Psoas muscle (tissue), 8 donors: ENCODE measurements at regions of chr1 and their contacts with region 1.

Region 1: DNA sequence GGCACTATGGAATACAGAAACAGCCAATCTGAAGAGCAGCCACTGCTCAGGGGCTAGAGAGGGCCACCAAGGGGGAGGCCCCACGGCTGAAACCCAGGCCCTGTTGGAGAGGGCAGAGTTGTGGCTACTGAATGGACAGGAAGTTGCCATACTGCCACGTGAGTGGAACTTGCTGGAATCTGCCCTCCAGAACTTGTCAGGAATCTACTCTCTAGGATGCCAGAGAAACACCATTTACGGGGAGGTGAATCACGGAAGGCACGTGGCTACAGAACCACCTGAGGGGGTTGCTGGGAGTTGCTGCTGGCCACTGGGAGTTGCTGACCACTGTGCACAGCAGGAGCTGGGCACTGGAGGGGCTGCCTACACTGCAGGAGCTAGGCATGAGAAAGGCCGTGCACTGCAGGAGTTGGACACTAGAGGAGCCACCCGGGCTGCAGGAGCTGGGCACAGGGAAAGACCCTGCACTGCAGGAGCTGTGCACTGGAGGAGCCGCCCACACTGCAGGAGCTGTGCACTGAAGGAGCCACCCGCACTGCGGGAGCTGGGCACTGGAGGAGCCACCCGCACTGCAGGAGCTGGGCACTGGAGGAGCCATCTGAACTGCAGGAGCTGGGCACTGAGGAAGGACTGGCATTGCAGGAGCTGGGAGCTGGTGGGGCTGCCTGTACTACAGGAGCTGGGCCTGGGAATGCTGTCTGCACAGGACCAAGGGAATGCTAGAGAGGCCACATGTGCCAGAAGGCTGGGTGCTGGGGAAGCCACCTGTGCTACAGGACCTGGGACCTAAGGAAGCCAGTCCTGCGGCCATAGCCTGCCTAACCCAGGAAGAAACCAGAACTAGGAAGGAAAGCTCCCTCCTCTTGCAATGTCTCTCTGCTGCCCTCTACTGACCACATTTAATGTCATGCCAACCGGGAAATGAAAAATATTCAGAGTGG is 343.4 kb downstream of the MATN1 start:
- DNase-seq: no peak
- ATAC-seq: peak; percentile 69 to 89 (median 85)
- H3K4me3 ChIP-seq: no peak overlapping the region
- H3K27ac ChIP-seq: no peak overlapping the region
- H3K4me1 ChIP-seq: no peaks in the 10 kb centered on the region
- H3K27me3 ChIP-seq: peaks cover 0 to 3% (median 0%) of the 10 kb centered on the region in 3 donors
- CTCF ChIP-seq: peak; percentile 84

Region 2: GRCh38 chr1:29802181-29803068 is 577.5 kb before region 1 on chr1:
- intact Hi-C with region 1: loop called in 1 of 2 experiments (anchors 10 kb)
- DNase-seq: no peak
- ATAC-seq: no peak
- H3K4me3 ChIP-seq: no peak overlapping the region
- H3K27ac ChIP-seq: no peak overlapping the region
- H3K4me1 ChIP-seq: no peaks in the 10 kb centered on the region
- H3K27me3 ChIP-seq: peaks cover 0 to 18% (median 2%) of the 10 kb centered on the region in 3 donors
- CTCF ChIP-seq: no peak

Region 3: DNA sequence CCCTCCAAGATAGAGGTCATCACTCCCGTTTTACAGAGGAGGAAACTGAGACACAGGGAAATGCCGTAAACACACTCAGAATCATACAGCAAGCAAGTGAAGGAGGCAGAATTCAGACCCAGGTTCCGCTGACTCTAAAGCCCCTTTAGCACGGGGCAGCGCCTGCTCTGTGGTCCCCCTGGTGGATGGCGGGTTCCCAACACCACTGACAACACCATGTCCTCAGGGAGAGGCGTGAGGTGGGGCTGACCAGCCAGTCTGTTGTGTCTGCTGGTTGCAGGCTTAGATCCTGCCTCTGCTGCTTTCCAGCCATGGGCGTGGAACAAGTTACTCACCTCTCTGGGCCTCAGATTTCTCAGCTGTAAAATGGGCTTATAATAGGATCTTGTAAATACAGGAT is 273.8 kb before region 1 on chr1:
- intact Hi-C with region 1: loop called in 1 of 2 experiments (anchors 5 kb)
- DNase-seq: no peak
- ATAC-seq: no peak
- H3K4me3 ChIP-seq: no peak overlapping the region
- H3K27ac ChIP-seq: no peak overlapping the region
- H3K4me1 ChIP-seq: no peaks in the 10 kb centered on the region
- H3K27me3 ChIP-seq: peaks cover 0 to 48% (median 23%) of the 10 kb centered on the region in 3 donors
- CTCF ChIP-seq: peak; percentile 37

Region 4: DNA sequence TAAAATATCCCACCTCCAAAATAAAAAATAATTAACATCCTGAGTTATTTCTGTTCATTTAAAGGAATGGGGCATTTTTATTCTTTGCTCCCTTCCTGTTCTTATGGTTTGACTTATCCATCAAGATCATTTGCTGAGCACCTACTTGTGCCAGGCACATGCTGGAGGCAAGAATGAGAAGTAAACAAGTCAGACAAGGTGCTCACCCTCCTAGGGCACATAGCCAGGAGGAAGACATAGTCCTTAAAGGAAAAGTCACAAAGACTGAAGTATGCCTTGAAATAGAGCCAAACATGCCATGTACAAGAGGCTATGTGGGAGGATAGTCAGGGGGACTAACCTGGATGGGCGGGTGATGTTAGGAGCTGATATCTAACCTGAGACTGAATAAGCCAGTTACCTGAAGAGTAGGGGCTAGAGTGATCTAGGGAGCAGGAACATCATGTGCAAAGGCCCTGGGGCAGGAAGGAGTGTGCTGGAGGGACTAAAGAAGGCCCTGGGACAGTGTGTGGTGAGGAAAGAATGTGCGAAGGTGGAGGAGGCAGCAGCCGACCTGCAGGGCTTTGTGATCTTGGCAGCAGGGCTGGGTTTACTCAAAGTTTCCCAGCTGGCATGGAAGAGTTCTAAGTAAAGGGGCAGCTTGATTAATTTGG is 109.9 kb after region 1 on chr1:
- intact Hi-C with region 1: no loop called
- DNase-seq: peak in 1 of 2 donors; percentile 3
- ATAC-seq: no peak
- H3K4me3 ChIP-seq: no peak overlapping the region
- H3K27ac ChIP-seq: no peak overlapping the region
- H3K4me1 ChIP-seq: no peaks in the 10 kb centered on the region
- H3K27me3 ChIP-seq: peaks cover 0 to 14% (median 0%) of the 10 kb centered on the region in 3 donors
- CTCF ChIP-seq: no peak